Right ventricle myocardium inferior (tissue), 1 donor: ENCODE measurements at regions of chr9 and their contacts with region 1.

Region 1: DNA sequence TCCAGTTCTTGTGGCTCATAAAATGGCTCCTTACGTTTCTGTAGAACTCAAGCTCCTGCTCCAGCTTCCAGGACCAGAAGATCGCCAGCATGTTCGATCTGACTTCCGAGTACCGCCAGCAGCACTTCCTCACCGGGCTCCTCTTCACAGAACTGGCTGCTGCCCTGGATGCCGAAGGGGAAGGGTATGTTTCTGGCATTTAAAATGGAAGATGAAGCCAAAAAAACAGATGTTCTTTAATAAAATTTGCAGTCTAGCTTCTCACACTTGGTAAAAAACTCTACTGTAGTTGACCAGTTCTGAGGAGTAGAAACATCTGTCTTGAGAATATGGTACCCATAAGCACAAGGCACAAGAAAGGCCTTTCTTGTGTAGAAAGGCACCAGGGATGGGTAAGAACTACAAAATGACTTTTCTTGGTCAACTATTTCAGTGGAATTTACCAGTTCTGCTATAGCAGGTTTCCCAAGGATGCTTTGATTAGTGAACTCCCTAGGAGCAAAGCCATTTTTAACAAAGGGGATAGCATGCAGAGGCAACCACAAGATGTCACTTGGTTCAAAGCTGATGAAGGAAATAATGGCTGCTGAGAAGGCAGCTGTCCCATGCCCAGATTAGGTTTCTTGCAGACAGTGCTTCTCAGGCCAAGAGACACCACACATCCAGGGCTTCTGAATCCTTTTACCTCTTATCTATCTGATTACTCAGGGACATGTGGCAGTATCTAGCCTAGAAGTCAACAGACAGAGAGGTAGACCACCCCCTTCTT is 192.4 kb downstream of the DOCK8 start:
- DNase-seq: no peak
- ATAC-seq: peak; percentile 79

Region 2: GRCh38 chr9:447230-448025 is 40.4 kb after region 1 on chr9:
- intact Hi-C with region 1: no loop called
- DNase-seq: no peak
- ATAC-seq: no peak

Region 3: DNA sequence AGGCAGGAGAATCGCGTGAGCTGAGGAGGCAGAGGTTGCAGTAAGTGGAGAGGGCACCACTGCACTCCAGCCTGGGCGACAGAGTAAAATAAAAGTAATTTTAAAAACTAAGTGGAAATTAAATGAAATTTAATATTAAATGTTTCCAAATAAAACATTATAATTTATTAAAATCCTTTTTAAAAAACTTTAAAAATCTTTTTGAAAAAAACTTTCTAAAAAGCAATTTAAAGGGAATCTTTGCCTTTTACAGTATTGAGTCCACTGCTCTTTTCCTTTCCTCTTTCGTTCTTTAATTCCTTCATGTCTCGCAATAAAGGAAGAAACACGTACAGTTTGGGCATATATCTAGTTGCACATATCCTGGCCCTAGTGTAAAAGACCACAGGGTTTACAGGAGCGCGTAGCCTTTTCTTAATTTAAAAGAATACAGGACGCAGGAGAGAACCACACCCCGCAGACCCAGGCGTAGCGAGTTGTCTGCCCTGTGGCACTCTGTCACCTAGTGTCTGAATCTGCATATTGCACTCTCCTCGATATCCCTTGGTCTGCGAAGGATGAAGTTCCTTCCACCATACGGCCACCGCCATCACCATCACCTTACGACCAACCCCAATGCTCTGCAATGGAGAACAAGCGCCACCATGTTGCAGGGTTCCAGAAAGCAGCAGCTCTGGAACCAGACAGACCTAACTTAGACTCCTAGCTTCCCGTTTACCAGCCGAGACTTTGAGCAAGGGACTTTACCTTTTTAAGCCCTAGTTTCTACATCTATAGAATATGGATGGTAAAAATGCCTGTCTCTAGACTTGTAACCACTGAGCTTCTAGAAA is 356.8 kb after region 1 on chr9:
- intact Hi-C with region 1: loop called (anchors 1 kb)
- DNase-seq: no peak
- ATAC-seq: peak; percentile 95